ENCODE measurements at regions of chr1 and their contacts with region 1.

Region 1: GRCh38 chr1:61049850-61050540 is 32.4 kb upstream of the NFIA start:
- DNase-seq: peak; percentile 79 to 96 (median 81)
- ATAC-seq: peak; percentile 70
- H3K4me3 ChIP-seq: peak overlapping the region; percentile 65
- H3K27ac ChIP-seq: peak overlapping the region; percentile 82
- H3K4me1 ChIP-seq: peaks cover 44 to 56% of the 10 kb centered on the region in 2 experiments
- H3K27me3 ChIP-seq: no peaks in the 10 kb centered on the region
- CTCF ChIP-seq: peak; percentile 89 to 97 (median 94)
- EP300 ChIP-seq: peak; percentile 62
- POLR2A ChIP-seq: peak; percentile 58; the same call in 1 of the 2 replicates
- RAD21 ChIP-seq: peak; percentile 82

Region 2: DNA sequence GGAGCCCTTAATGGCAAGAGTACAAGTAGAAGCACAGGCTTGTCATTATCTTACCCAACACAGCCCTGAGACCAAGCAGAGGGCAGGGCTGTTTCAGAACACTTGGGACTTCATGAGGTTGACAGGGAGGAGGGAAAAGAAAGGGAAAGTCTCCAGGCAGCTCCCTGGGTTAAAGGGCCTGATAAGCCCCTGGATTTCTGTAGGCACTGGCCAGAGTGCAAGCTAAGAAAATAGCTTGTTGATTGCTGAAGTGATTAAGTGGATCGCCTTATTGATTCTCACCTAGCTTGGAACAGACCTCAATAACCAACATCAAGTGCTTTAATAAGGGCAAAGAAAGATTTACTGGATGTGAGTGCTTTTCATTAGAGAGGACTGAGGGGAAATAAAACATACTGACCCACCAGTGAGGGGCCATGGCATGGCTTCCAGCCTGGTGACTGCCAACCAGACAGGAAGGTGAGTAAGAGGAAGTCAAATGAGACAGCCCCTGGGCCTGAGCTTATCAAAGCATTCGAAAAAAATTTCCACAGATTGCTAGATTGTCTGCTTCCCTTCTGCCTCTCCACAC is 89.0 kb before region 1 on chr1:
- CTCF ChIA-PET with region 1: no interaction called
- POLR2A ChIA-PET with region 1: no interaction called
- in situ Hi-C with region 1: no loop called
- intact Hi-C with region 1: no loop called
- DNase-seq: peak in 2 of 4 experiments; percentile 42 to 71
- ATAC-seq: peak; percentile 80
- H3K4me3 ChIP-seq: no peak overlapping the region
- H3K27ac ChIP-seq: peak overlapping the region; percentile 63; the same call in 2 of the 3 replicates
- H3K4me1 ChIP-seq: peaks cover 6 to 31% of the 10 kb centered on the region in 2 experiments; a peak in 4 of 5 replicates
- H3K27me3 ChIP-seq: no peaks in the 10 kb centered on the region
- CTCF ChIP-seq: no peak
- EP300 ChIP-seq: no peak
- POLR2A ChIP-seq: no peak
- RAD21 ChIP-seq: no peak

Region 3: GRCh38 chr1:60978421-60979357 is 71.3 kb before region 1 on chr1:
- CTCF ChIA-PET with region 1: interaction called, 4 read pairs
- POLR2A ChIA-PET with region 1: interaction called, 6 read pairs
- in situ Hi-C with region 1: no loop called
- intact Hi-C with region 1: loop called (anchors 1 kb)
- DNase-seq: peak; percentile 63 to 80 (median 74)
- ATAC-seq: peak; percentile 98
- H3K4me3 ChIP-seq: no peak overlapping the region
- H3K27ac ChIP-seq: no peak overlapping the region
- H3K4me1 ChIP-seq: peaks cover 5 to 16% of the 10 kb centered on the region in 2 experiments; a peak in 3 of 5 replicates
- H3K27me3 ChIP-seq: no peaks in the 10 kb centered on the region
- CTCF ChIP-seq: peak; percentile 86 to 95 (median 90)
- EP300 ChIP-seq: 0 out of 2 replicates have a peak, but pooled peaks have one; percentile 11
- POLR2A ChIP-seq: no peak
- RAD21 ChIP-seq: peak; percentile 95 to 98

Region 4: GRCh38 chr1:61141288-61142042 is 91.5 kb after region 1 on chr1:
- CTCF ChIA-PET with region 1: no interaction called
- POLR2A ChIA-PET with region 1: interaction called, 4 read pairs
- in situ Hi-C with region 1: loop called (anchors 5 kb)
- intact Hi-C with region 1: loop called (anchors 5 kb)
- DNase-seq: peak in 2 of 4 experiments; percentile 25 to 47
- ATAC-seq: peak; percentile 56
- H3K4me3 ChIP-seq: no peak overlapping the region
- H3K27ac ChIP-seq: peak overlapping the region; percentile 51
- H3K4me1 ChIP-seq: peaks cover 8 to 33% of the 10 kb centered on the region in 2 experiments
- H3K27me3 ChIP-seq: no peaks in the 10 kb centered on the region
- CTCF ChIP-seq: no peak
- EP300 ChIP-seq: peak; percentile 94
- POLR2A ChIP-seq: no peak
- RAD21 ChIP-seq: 0 out of 4 replicates have a peak, but pooled peaks of 1 of the 2 experiments have one; percentile 6

Region 5: DNA sequence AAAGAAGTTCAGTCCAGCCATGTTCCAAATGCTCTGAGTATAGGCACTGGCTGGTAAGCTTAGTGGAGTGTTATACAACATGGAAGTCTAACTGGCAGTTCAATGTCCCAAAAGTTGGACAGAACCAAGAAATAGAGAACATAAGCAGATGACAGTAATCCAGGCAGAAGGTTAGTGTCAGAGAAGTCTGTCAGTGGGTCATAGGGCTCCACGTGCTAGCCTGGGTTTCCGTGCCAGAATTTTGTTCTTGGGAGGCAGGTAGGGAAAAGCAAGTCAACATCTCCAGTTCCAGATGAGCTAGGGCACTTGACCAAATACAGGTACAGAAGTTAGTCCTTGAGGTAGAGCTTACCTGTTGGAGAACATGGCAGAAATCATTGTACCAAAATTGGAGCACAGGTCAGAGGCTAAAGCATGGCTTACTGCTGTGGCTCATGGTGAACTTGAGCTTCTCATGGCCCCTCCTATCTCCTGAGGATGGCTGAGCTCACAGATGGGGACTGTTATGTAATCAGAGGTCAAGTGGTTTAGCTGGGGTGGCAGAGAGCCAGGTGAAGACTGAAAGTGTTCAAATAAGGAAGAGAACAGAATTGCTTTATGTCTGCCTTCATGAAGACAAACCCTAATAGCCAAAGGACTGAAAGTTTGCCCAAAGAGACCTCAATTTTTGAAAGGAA is 203.2 kb after region 1 on chr1:
- CTCF ChIA-PET with region 1: no interaction called
- POLR2A ChIA-PET with region 1: interaction called, 5 read pairs
- in situ Hi-C with region 1: no loop called
- intact Hi-C with region 1: loop called (anchors 5 kb)
- DNase-seq: peak; percentile 49 to 93 (median 76)
- ATAC-seq: peak; percentile 94
- H3K4me3 ChIP-seq: no peak overlapping the region
- H3K27ac ChIP-seq: peak overlapping the region; percentile 82
- H3K4me1 ChIP-seq: peaks cover 10 to 30% of the 10 kb centered on the region in 2 experiments
- H3K27me3 ChIP-seq: no peaks in the 10 kb centered on the region
- CTCF ChIP-seq: no peak
- EP300 ChIP-seq: peak; percentile 58
- POLR2A ChIP-seq: peak; percentile 60
- RAD21 ChIP-seq: no peak

Region 6: GRCh38 chr1:61453111-61453961 is 403.3 kb after region 1 on chr1:
- CTCF ChIA-PET with region 1: interaction called, 3 read pairs
- POLR2A ChIA-PET with region 1: no interaction called
- in situ Hi-C with region 1: no loop called
- intact Hi-C with region 1: loop called (anchors 2 kb)
- DNase-seq: peak; percentile 59 to 85 (median 68)
- ATAC-seq: peak; percentile 97
- H3K4me3 ChIP-seq: no peak overlapping the region
- H3K27ac ChIP-seq: no peak overlapping the region
- H3K4me1 ChIP-seq: peaks cover 3 to 7% of the 10 kb centered on the region in 2 experiments; a peak in 3 of 5 replicates
- H3K27me3 ChIP-seq: no peaks in the 10 kb centered on the region
- CTCF ChIP-seq: peak; percentile 74 to 85 (median 83)
- EP300 ChIP-seq: no peak
- POLR2A ChIP-seq: no peak
- RAD21 ChIP-seq: peak; percentile 80 to 82